Pancreas (tissue), 10 donors: ENCODE measurements at regions of chr16 and their contacts with region 1.

Region 1: GRCh38 chr16:85717393-85718121 is 28.8 kb upstream of the GINS2 start:
- DNase-seq: peak; percentile 49 to 87 (median 70)
- ATAC-seq: peak; percentile 68 to 87 (median 85)
- H3K4me3 ChIP-seq: no peak overlapping the region
- H3K27ac ChIP-seq: no peak overlapping the region
- H3K4me1 ChIP-seq: no peaks in the 10 kb centered on the region
- H3K27me3 ChIP-seq: no peaks in the 10 kb centered on the region
- CTCF ChIP-seq: peak; percentile 46 to 69 (median 58)

Region 2: DNA sequence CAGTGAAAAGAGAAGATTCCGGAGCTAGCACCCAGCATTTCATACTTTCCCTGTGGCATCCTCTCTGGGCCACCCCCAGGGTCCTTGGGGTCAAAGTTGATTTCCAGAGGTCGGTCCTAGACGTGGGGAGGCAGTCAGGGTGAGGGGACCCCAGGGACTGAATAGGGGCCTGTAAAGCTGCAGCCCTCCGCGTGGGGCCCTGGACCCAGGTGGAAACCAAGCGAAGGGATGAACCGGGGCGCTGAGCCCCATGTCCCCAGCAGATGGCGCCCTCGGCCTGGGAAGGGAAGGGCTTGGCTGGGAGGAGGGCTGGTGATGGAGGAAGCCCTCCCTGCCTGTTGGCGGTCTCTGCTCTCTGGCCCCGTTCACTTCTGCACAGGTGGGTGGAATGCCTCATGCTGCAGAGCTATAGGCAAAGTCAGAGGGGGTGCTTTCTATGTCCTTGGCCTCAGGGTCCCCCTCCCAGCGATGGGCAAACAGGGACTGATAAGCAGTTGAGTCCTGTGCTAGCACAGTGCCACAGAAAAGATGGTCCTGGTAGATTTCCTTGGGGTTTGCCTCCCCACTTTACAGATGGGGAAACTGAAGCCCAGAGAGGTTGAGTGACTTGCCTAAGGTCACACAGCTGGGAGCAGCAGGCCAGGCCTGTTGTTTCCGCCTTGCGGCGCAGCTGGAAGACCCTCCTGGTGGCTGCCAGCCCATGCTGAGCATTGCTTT is 441.9 kb before region 1 on chr16:
- intact Hi-C with region 1: loop called in 1 of 3 experiments (anchors 10 kb)
- DNase-seq: peak in 5 of 6 donors; percentile 33 to 95 (median 73)
- ATAC-seq: peak; percentile 73 to 89 (median 86)
- H3K4me3 ChIP-seq: no peak overlapping the region
- H3K27ac ChIP-seq: no peak overlapping the region
- H3K4me1 ChIP-seq: no peaks in the 10 kb centered on the region
- H3K27me3 ChIP-seq: no peaks in the 10 kb centered on the region
- CTCF ChIP-seq: peak; percentile 72 to 89 (median 86)

Region 3: GRCh38 chr16:85437166-85438055 is 280.1 kb before region 1 on chr16:
- intact Hi-C with region 1: no loop called
- DNase-seq: peak in 4 of 6 donors; percentile 64 to 89 (median 82)
- ATAC-seq: peak; percentile 78 to 90 (median 87)
- H3K4me3 ChIP-seq: peak overlapping the region in 2 of 4 donors; percentile 13 to 21
- H3K27ac ChIP-seq: peak overlapping the region; percentile 77 to 90 (median 82)
- H3K4me1 ChIP-seq: peaks cover 11 to 12% (median 11%) of the 10 kb centered on the region in 3 donors
- H3K27me3 ChIP-seq: no peaks in the 10 kb centered on the region
- CTCF ChIP-seq: no peak

Region 4: DNA sequence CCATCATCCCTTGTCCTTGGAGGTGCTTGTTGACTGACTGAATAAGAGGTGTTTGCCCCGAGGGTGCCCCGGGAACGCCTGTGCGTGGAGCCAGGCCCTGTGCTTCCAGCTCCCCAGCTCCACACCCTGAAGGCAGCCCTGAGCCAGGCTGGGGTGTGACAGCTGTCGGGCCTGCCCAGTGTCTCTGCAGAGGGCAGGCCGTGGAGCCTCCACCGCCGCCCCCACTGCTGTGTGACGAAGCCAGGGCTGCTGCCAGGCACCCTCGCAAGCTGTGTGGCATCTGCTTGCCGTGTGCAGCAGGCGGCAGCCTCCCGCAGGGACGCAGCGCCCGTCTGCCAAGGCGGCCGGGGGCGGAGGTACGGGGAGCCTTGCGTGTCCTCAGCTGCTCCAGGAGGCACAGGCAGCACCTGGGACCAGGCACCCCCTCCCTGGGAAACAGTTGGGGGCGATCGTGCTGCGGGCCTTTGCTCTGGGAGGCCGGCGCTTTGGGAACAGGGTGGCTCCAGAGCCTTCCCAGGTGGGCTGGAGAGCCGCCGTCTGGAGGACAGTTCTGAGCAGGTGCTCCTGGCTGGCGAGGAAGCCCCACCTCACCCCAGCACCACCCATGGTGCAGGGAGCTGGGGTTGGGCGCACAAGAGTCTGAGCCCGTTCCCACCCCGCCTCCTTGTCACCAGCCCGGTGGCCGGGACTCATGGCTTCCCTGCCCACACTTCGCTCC is 77.9 kb before region 1 on chr16:
- intact Hi-C with region 1: no loop called
- DNase-seq: peak; percentile 60 to 92 (median 83)
- ATAC-seq: peak; percentile 46 to 61 (median 54)
- H3K4me3 ChIP-seq: no peak overlapping the region
- H3K27ac ChIP-seq: peak overlapping the region; percentile 30 to 67 (median 42)
- H3K4me1 ChIP-seq: peaks cover 34 to 55% (median 45%) of the 10 kb centered on the region in 3 donors
- H3K27me3 ChIP-seq: no peaks in the 10 kb centered on the region
- CTCF ChIP-seq: no peak

Region 5: DNA sequence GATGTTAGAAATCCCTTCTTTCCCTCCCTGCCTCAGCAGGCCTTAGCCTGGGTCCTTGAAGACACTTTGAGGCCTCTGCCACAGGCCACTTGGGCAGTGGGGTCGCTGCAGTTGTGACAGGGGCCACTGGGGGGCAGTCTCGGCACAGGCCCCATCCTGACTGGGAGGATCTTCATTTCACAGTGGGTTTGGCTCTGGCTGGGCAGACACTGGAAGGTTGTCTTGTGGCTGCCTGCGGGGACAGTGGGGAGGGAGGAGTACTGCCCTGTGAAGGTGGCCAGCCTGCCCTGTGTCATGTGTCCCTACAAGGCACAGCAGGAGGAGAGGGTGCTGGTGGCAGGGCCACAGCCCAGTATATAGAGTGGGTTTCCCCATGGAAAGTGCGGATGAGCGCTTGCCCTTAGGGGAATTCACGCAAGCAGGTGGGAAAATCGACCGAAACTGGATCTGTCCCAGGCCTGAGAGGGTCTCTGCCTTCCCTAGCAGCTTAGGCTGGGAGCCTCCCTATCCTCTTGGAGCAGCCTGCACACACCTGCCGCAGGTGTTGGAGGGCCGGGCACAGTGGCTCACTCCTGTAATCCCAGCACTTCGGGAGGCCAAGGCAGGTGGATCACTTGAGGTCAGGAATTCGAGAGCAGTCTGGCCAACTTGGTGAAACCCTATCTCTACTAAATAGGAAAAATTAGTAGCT is 57.6 kb before region 1 on chr16:
- intact Hi-C with region 1: loop called in 2 of 3 experiments (anchors 5 kb)
- DNase-seq: peak in 4 of 6 donors; percentile 61 to 85 (median 67)
- ATAC-seq: peak; percentile 18 to 77 (median 69)
- H3K4me3 ChIP-seq: no peak overlapping the region
- H3K27ac ChIP-seq: no peak overlapping the region
- H3K4me1 ChIP-seq: no peaks in the 10 kb centered on the region
- H3K27me3 ChIP-seq: no peaks in the 10 kb centered on the region
- CTCF ChIP-seq: peak; percentile 75 to 83 (median 76)

Region 6: DNA sequence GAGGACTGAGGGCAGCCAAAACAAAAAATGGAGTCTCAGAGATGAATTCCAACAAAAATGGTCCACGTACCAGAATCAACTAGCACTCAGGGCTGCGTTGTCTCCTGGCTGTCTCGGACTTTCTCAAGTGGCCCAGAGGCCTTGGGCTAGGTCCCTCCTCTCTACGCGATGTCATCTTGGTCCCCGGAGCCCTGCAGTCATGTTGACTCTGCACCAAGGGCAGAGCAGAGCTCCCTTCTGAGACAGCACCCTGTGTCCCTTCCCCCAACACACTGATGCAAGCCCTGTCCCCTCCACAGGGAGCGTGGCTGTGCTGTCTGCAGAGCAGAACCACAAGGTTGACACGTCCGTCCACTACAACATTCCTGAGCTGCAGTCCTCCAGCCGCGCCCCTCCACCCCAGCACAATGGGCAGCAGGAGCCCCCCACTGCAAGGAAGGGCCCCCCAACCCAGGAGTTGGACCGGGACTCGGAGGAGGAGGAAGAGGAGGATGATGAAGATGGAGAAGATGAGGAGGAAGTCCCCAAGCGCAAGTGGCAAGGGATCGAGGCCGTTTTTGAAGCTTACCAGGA is 49.6 kb before region 1 on chr16:
- intact Hi-C with region 1: loop called in 1 of 3 experiments (anchors 5 kb)
- DNase-seq: peak in 2 of 6 donors; percentile 46 to 51
- ATAC-seq: no peak
- H3K4me3 ChIP-seq: no peak overlapping the region
- H3K27ac ChIP-seq: no peak overlapping the region
- H3K4me1 ChIP-seq: peaks cover 0 to under 1% (median 0%) of the 10 kb centered on the region in 3 donors
- H3K27me3 ChIP-seq: no peaks in the 10 kb centered on the region
- CTCF ChIP-seq: no peak

Region 7: DNA sequence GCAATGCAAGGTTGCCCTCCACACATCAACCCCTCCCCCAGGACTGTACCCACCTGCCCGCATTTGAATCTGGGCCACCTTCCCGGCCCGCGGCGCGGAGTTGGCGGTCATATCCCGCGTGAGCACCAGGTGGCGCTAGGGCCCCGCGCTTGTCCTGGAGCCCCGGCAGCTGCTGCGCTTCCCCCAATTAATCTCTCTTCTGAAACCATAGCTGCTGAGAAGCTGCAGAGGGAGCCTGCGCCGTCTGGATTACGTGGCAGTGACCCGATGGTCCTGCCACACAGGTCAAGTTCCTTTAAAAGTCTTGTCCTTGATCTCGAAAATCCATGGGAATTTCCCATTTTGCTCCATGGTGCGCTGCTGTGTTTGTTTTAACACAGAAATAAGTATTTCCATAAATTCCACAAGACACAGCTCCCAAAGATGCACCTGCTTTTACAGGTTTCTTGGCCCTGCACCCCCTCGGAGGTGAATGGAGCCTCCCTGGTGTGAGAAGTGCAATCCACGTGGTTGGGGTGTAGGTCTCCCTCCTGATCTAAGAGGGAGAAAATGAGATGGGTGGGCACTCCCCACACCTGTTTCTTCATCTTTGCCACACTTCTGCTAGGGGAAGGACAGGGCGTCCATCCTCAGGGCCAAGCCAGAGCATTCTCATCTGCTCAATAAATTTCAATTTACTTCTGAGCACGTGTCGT is 104.0 kb after region 1 on chr16:
- intact Hi-C with region 1: no loop called
- DNase-seq: peak; percentile 71 to 93 (median 84)
- ATAC-seq: peak; percentile 86 to 97 (median 96)
- H3K4me3 ChIP-seq: no peak overlapping the region
- H3K27ac ChIP-seq: no peak overlapping the region
- H3K4me1 ChIP-seq: no peaks in the 10 kb centered on the region
- H3K27me3 ChIP-seq: peaks cover 0 to 4% (median 0%) of the 10 kb centered on the region in 4 donors
- CTCF ChIP-seq: peak; percentile 94 to 96 (median 94)

Region 8: GRCh38 chr16:85888405-85889331 is 171.1 kb after region 1 on chr16:
- intact Hi-C with region 1: no loop called
- DNase-seq: no peak
- ATAC-seq: peak in 1 of 4 donors; percentile 57
- H3K4me3 ChIP-seq: no peak overlapping the region
- H3K27ac ChIP-seq: no peak overlapping the region
- H3K4me1 ChIP-seq: peaks cover 0 to 6% (median 0%) of the 10 kb centered on the region in 3 donors
- H3K27me3 ChIP-seq: peaks cover 0 to 20% (median 0%) of the 10 kb centered on the region in 4 donors
- CTCF ChIP-seq: no peak